Cardiac septum (tissue), 1 donor: ENCODE measurements at regions of chr2 and their contacts with region 1.

Region 1: GRCh38 chr2:170715062-170715931 is at the start of gene SP5:
- DNase-seq: no peak
- total RNA-seq, gene SP5: 0.92 TPM

Region 2: DNA sequence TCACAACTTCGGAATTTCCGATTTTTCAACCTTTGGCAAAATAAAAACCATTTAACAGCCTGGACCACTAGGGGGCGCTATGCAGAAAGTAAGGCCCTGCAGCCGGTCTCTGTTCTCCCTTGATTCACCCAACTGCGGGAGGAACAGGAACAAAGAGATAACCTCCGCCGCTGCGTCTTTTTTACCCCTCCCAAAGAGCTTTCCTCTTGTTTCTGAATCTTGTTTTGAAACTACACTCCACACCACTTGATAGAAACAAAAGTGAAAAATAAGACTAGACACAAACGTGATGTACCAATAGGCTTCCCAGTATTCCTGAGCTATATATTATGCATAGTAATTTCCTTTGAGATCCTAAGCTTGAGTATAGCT is 306.1 kb before region 1 on chr2:
- intact Hi-C with region 1: loop called (anchors 10 kb)
- DNase-seq: no peak

Region 3: DNA sequence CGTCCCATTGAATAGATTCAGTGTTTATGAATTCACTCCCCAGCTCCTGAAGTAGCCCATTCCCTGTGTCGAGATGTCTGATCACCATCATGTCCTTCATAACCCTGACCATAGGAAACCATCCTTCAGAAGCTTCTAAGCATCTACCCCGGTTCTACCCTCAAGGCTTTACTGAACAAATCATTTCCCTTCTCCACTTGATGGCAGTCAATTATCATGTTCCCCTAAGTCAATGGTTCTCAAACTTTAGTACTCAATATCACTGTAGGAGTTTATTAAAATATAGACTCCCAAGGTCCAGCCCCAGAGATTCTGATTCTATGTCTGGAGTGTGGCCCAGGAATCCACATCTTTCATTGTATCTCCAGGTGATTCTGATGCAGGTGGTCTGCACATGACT is 228.6 kb before region 1 on chr2:
- intact Hi-C with region 1: loop called (anchors 5 kb)
- DNase-seq: no peak

Region 4: GRCh38 chr2:170500770-170501169 is 214.5 kb before region 1 on chr2:
- intact Hi-C with region 1: loop called (anchors 5 kb)
- DNase-seq: no peak

Region 5: GRCh38 chr2:170554278-170554955 is 160.9 kb before region 1 on chr2:
- intact Hi-C with region 1: no loop called
- DNase-seq: peak; percentile 77